ENCODE measurements at regions of chr4 and their contacts with region 1.

Region 1: GRCh38 chr4:4260253-4260652 is 12.2 kb upstream of the TMEM128 start:
- DNase-seq: peak in 3 of 9 experiments; percentile 16 to 86 (median 81)
- ATAC-seq: peak; percentile 100
- H3K4me3 ChIP-seq: no peak overlapping the region
- H3K4me3 Mint-ChIP-seq: no peak overlapping the region
- H3K27ac ChIP-seq: no peak overlapping the region
- H3K27ac Mint-ChIP-seq: peak overlapping the region; percentile 56
- H3K4me1 ChIP-seq: no peaks in the 10 kb centered on the region
- H3K4me1 Mint-ChIP-seq: peaks cover 13% of the 10 kb centered on the region
- H3K27me3 ChIP-seq: no peaks in the 10 kb centered on the region
- H3K27me3 Mint-ChIP-seq: no peaks in the 10 kb centered on the region
- CTCF ChIP-seq: peak; percentile 86

Region 2: DNA sequence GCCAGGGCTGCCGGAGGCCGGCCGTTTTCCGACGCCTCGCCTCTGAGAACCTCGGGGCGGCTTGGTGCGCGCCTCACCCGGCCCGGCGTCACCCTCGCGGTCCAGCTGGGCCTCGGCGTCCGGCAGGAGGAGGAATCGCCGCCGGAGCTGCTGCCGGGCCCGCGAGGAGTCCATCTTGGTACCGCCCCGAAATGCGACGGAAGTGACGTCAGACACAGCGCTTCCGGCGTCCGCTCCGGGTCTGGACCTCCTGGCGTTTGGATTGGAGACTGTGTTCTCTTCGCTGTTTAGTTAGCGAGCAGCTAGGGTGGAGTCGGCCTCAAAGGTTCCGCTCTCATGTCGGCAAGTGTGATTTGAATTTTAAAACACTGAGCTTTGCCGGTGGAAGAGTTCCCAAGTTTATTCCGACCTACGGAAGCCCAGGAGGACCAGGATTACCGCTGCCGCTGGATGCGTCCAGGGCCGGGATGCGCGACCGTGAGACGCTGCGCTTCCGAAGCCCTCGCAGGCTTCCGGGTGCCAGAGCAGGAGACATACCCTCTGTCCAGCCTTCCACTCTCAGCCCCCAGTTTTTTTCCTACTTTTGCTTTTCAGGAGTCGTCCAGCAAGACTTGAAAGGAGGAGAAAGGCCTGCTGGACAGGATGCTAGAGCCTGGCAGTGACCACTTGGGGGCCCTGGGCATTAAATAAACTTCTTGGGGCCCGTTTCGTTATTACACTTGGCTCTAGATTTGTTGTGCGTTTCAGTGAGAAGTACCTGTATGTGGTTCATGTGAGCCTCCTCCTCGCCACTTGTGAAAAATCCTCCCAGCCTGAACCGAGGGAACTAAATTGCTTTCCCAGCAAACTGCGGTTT is 12.0 kb before region 1 on chr4 and contains the start of gene TMEM128:
- CTCF ChIA-PET with region 1: interaction called, 34 read pairs
- POLR2A ChIA-PET with region 1: interaction called, 5 read pairs
- intact Hi-C with region 1: loop called in 1 of 2 experiments (anchors 1 kb)
- DNase-seq: peak; percentile 85 to 96 (median 93)
- ATAC-seq: peak; percentile 95
- H3K4me3 ChIP-seq: peak within 1 kb of the TSS; percentile 85 to 89
- H3K4me3 Mint-ChIP-seq: peak within 1 kb of the TSS; percentile 96
- H3K27ac ChIP-seq: peak within 1 kb of the TSS; percentile 89 to 95
- H3K27ac Mint-ChIP-seq: peak within 1 kb of the TSS; percentile 99
- H3K4me1 ChIP-seq: peaks cover 17% of the 10 kb centered on the region
- H3K4me1 Mint-ChIP-seq: peaks cover 42% of the 10 kb centered on the region
- H3K27me3 ChIP-seq: no peaks in the 10 kb centered on the region
- H3K27me3 Mint-ChIP-seq: no peaks in the 10 kb centered on the region
- CTCF ChIP-seq: no peak
- total RNA-seq, gene TMEM128: 6.4 TPM

Region 3: DNA sequence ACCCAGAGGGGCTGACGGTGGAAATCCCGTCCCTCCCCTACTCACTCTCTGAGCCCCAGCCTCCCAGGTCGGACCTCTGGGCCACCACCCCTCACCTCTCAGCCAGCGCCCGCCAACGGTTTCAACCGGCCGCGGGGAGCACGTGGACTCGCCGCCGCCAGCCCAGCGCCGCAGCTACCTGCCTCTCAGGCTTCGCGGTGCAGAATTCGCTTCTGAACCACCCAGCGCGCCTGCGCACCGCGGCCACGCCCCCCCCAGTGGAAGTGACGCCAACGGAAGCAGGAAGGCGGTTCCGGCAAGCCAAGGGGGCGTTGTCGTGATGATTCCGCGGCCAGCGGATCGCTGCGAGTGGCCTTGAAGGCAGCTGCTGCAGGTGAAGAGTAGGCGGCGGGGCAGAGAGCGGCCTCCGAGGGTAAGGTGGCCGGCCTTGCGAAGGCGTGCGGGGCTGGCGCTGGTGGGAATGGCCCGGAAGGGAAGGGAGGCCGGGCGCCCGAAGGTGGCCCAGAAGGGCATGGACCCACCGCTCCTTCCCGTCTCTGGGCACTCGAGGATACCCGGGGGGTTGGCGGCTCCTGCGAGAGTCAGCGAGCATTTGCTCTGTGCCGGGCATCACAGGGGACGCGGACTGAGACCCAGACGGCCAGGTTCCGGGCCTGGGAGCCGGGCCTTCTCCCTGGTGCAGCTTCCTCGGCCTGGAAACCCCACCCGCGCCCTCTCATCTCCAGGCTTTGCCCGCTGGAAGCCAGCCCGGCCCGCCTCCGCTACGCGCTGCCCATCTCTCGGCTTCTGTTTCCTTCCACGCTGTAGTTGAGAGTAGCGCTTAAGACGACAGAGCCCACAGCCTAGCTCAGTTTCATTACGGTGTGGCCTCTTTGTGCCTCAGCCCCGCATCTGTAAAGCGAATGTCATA is 29.9 kb after region 1 on chr4 and contains the starts of genes LYAR and ZBTB49:
- CTCF ChIA-PET with region 1: interaction called, 23 read pairs
- POLR2A ChIA-PET with region 1: interaction called, 4 read pairs
- intact Hi-C with region 1: loop called in 1 of 2 experiments (anchors 2 kb)
- DNase-seq: peak; percentile 95 to 98 (median 97)
- ATAC-seq: peak; percentile 92
- H3K4me3 ChIP-seq: peak within 1 kb of the TSS; percentile 88 to 89
- H3K4me3 Mint-ChIP-seq: peak within 1 kb of the TSS; percentile 97
- H3K27ac ChIP-seq: peak within 1 kb of the TSS; percentile 74 to 77
- H3K27ac Mint-ChIP-seq: peak within 1 kb of the TSS; percentile 96
- H3K4me1 ChIP-seq: peaks cover 31% of the 10 kb centered on the region
- H3K4me1 Mint-ChIP-seq: peaks cover 75% of the 10 kb centered on the region
- H3K27me3 ChIP-seq: no peaks in the 10 kb centered on the region
- H3K27me3 Mint-ChIP-seq: no peaks in the 10 kb centered on the region
- CTCF ChIP-seq: no peak
- total RNA-seq, gene LYAR: 57.8 to 59.0 TPM
- total RNA-seq, gene ZBTB49: 15.9 to 21.1 TPM

Region 4: DNA sequence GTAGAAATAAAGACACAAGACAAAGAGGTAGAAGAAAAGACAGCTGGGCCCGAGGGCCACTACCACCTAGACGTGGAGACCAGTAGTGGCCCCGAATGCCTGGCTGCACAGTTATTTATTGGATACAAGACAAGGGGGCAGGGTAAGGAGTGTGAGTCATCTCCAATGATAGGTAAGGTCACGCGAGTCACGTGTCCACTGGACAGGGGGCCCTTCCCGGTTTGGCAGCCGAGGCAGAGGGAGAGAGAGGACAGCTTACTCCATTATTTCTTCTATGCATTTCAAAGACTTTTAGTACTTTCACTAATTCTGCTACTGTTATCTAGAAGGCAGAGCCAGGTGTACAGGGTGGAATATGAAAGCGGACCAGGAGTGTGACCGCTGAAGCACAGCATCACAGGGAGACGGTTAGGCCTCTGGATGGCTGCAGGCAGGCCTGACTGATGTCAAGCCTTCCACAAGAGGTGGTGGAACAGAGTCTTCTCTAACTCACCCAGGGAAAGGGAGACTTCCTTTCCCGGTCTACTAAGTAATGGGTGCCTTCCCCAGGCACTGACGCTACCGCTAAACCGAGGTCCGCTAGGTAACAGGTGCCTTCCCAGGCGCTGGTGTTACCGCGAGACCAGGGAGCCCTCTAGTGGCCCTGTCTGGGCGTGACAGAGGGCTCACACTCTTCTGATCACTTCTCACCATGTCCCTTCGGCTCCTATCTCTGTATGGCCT is 74.7 kb after region 1 on chr4:
- CTCF ChIA-PET with region 1: interaction called, 148 read pairs
- POLR2A ChIA-PET with region 1: interaction called, 3 read pairs
- intact Hi-C with region 1: loop called (anchors 1 kb)
- DNase-seq: peak; percentile 55 to 88 (median 77)
- ATAC-seq: peak; percentile 100
- H3K4me3 ChIP-seq: no peak overlapping the region
- H3K4me3 Mint-ChIP-seq: peak overlapping the region; percentile 43
- H3K27ac ChIP-seq: no peak overlapping the region
- H3K27ac Mint-ChIP-seq: peak overlapping the region; percentile 49
- H3K4me1 ChIP-seq: peaks cover 6% of the 10 kb centered on the region
- H3K4me1 Mint-ChIP-seq: peaks cover 17% of the 10 kb centered on the region
- H3K27me3 ChIP-seq: no peaks in the 10 kb centered on the region
- H3K27me3 Mint-ChIP-seq: no peaks in the 10 kb centered on the region
- CTCF ChIP-seq: peak; percentile 65

Region 5: DNA sequence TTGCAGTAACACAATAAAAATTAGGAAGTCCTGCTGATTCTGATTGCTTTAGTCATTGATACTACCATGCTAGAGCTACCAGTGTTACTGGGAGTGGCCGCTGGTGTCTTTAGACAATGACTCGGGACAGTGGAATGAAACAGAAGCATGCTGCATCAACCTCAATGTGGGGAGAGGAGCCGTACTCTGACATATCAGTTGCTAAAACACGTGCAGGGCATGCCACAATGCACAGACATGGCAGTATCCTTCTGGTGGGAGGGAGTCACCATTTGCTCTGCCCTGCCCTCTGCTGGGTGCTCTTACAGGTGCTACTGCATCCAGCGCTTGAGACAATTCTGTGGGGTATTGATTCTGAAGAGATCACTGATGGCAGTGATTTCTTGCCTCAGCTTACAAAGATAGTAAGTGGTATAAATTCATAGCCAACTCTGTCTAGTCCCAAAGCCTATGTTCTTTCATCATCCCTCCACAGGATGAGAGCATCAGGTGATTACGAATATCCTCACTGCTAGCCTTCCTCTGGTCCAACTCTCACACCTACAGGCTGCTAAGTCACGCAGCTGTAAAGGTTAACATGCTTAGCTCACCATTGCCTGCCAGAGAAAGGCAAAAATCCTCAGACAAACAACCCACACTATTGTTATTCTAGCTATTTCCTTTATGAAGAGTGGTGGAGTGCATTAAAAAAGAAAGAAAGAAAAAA is 170.4 kb after region 1 on chr4:
- CTCF ChIA-PET with region 1: interaction called, 136 read pairs
- POLR2A ChIA-PET with region 1: no interaction called
- intact Hi-C with region 1: loop called (anchors 1 kb)
- DNase-seq: peak; percentile 21 to 74 (median 59)
- ATAC-seq: peak; percentile 99
- H3K4me3 ChIP-seq: no peak overlapping the region
- H3K4me3 Mint-ChIP-seq: no peak overlapping the region
- H3K27ac ChIP-seq: no peak overlapping the region
- H3K27ac Mint-ChIP-seq: peak overlapping the region; percentile 52
- H3K4me1 ChIP-seq: peaks cover 6% of the 10 kb centered on the region
- H3K4me1 Mint-ChIP-seq: peaks cover 4% of the 10 kb centered on the region
- H3K27me3 ChIP-seq: no peaks in the 10 kb centered on the region
- H3K27me3 Mint-ChIP-seq: no peaks in the 10 kb centered on the region
- CTCF ChIP-seq: peak; percentile 72

Measured in CD8-positive, alpha-beta T cell (primary cell).